CD4-positive, alpha-beta T cell (primary cell): ENCODE measurements at regions of chr2 and their contacts with region 1.

Region 1: GRCh38 chr2:62705007-62705829 is at the start of gene EHBP1:
- DNase-seq: peak; percentile 93 to 99 (median 97)
- ATAC-seq: peak; percentile 96
- H3K4me3 ChIP-seq: peak within 1 kb of the TSS; percentile 80
- H3K4me3 Mint-ChIP-seq: peak within 1 kb of the TSS; percentile 91
- H3K27ac ChIP-seq: peak within 1 kb of the TSS in 1 of 2 donors; percentile 24
- H3K27ac Mint-ChIP-seq: peak within 1 kb of the TSS; percentile 88
- H3K4me1 ChIP-seq: peaks cover 21% of the 10 kb centered on the region
- H3K4me1 Mint-ChIP-seq: peaks cover 36% of the 10 kb centered on the region
- H3K27me3 ChIP-seq: no peaks in the 10 kb centered on the region
- H3K27me3 Mint-ChIP-seq: no peaks in the 10 kb centered on the region
- CTCF ChIP-seq: no peak
- total RNA-seq, gene EHBP1: 21.4 to 22.3 TPM

Region 2: GRCh38 chr2:61905372-61906185 is 799.6 kb before region 1 on chr2 and contains the start of gene COMMD1:
- CTCF ChIA-PET with region 1: no interaction called
- POLR2A ChIA-PET with region 1: no interaction called
- intact Hi-C with region 1: loop called in 1 of 2 experiments (anchors 5 kb)
- DNase-seq: peak; percentile 60 to 89 (median 74)
- ATAC-seq: peak; percentile 97
- H3K4me3 ChIP-seq: peak within 1 kb of the TSS; percentile 92
- H3K4me3 Mint-ChIP-seq: peak within 1 kb of the TSS; percentile 96
- H3K27ac ChIP-seq: peak within 1 kb of the TSS; percentile 23 to 38
- H3K27ac Mint-ChIP-seq: peak within 1 kb of the TSS; percentile 88
- H3K4me1 ChIP-seq: peaks cover 10% of the 10 kb centered on the region
- H3K4me1 Mint-ChIP-seq: peaks cover 22% of the 10 kb centered on the region
- H3K27me3 ChIP-seq: no peaks in the 10 kb centered on the region
- H3K27me3 Mint-ChIP-seq: no peaks in the 10 kb centered on the region
- CTCF ChIP-seq: no peak
- total RNA-seq, gene COMMD1: 11.5 to 13.2 TPM

Region 3: GRCh38 chr2:62604336-62604735 is 100.9 kb before region 1 on chr2:
- CTCF ChIA-PET with region 1: no interaction called
- POLR2A ChIA-PET with region 1: no interaction called
- intact Hi-C with region 1: no loop called
- DNase-seq: no peak
- ATAC-seq: no peak
- H3K4me3 ChIP-seq: no peak overlapping the region
- H3K4me3 Mint-ChIP-seq: no peak overlapping the region
- H3K27ac ChIP-seq: no peak overlapping the region
- H3K27ac Mint-ChIP-seq: no peak overlapping the region
- H3K4me1 ChIP-seq: no peaks in the 10 kb centered on the region
- H3K4me1 Mint-ChIP-seq: no peaks in the 10 kb centered on the region
- H3K27me3 ChIP-seq: peaks cover 3 to 5% of the 10 kb centered on the region in 2 experiments
- H3K27me3 Mint-ChIP-seq: peaks cover 44% of the 10 kb centered on the region
- CTCF ChIP-seq: no peak

Region 4: GRCh38 chr2:64283641-64284361 is 1578.6 kb after region 1 on chr2:
- CTCF ChIA-PET with region 1: no interaction called
- POLR2A ChIA-PET with region 1: no interaction called
- intact Hi-C with region 1: loop called in 1 of 2 experiments (anchors 5 kb)
- DNase-seq: peak in 10 of 14 experiments; percentile 7 to 70 (median 32)
- ATAC-seq: peak; percentile 95
- H3K4me3 ChIP-seq: peak overlapping the region; percentile 44
- H3K4me3 Mint-ChIP-seq: no peak overlapping the region
- H3K27ac ChIP-seq: peak overlapping the region; percentile 39 to 53
- H3K27ac Mint-ChIP-seq: no peak overlapping the region
- H3K4me1 ChIP-seq: peaks cover 14% of the 10 kb centered on the region
- H3K4me1 Mint-ChIP-seq: no peaks in the 10 kb centered on the region
- H3K27me3 ChIP-seq: no peaks in the 10 kb centered on the region
- H3K27me3 Mint-ChIP-seq: no peaks in the 10 kb centered on the region
- CTCF ChIP-seq: no peak